Posterior cingulate gyrus (tissue), 11 donors: ENCODE measurements at regions of chr11 and their contacts with region 1.

Region 1: GRCh38 chr11:45110562-45110961 is 35.9 kb upstream of the PRDM11 start:
- DNase-seq: peak in 1 of 10 donors; percentile 41

Region 2: GRCh38 chr11:44246726-44247125 is 863.8 kb before region 1 on chr11:
- intact Hi-C with region 1: no loop called
- DNase-seq: no peak

Region 3: DNA sequence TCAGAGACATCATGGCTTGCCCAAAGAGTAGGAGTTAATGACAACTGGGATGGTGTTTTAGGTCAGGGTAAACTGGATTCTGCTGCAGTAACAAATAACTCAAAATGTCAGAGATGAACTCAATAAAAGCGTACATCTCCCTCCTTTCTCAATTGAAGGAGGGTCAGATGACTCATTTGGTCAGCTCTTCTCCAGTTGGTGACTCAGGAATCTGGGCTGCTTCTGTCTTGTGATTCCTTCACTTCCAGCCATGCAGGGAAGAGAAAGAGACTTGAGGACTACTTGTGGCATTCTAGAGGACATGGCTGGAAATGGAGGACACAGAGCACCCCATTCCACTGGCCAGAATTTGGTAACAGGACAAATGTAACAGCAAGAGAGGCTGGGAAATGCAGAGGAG is 178.8 kb after region 1 on chr11:
- intact Hi-C with region 1: loop called (anchors 1 kb)
- DNase-seq: no peak

Region 4: GRCh38 chr11:45332276-45332934 is 221.8 kb after region 1 on chr11:
- intact Hi-C with region 1: loop called (anchors 1 kb)
- DNase-seq: peak in 3 of 10 donors; percentile 37 to 72 (median 45)

Region 5: GRCh38 chr11:45617871-45618601 is 507.5 kb after region 1 on chr11:
- intact Hi-C with region 1: no loop called
- DNase-seq: no peak